Pancreas (tissue), 10 donors: ENCODE measurements at regions of chr2 and their contacts with region 1.

Region 1: GRCh38 chr2:64865073-64865830 is 123.9 kb upstream of the SLC1A4 start:
- DNase-seq: peak; percentile 46 to 84 (median 70)
- ATAC-seq: peak; percentile 89 to 96 (median 92)
- H3K4me3 ChIP-seq: peak overlapping the region; percentile 57 to 65 (median 64)
- H3K27ac ChIP-seq: peak overlapping the region; percentile 48 to 91 (median 68)
- H3K4me1 ChIP-seq: peaks cover 0 to 6% (median 0%) of the 10 kb centered on the region in 3 donors
- H3K27me3 ChIP-seq: no peaks in the 10 kb centered on the region
- CTCF ChIP-seq: peak; percentile 42 to 85 (median 62)

Region 2: DNA sequence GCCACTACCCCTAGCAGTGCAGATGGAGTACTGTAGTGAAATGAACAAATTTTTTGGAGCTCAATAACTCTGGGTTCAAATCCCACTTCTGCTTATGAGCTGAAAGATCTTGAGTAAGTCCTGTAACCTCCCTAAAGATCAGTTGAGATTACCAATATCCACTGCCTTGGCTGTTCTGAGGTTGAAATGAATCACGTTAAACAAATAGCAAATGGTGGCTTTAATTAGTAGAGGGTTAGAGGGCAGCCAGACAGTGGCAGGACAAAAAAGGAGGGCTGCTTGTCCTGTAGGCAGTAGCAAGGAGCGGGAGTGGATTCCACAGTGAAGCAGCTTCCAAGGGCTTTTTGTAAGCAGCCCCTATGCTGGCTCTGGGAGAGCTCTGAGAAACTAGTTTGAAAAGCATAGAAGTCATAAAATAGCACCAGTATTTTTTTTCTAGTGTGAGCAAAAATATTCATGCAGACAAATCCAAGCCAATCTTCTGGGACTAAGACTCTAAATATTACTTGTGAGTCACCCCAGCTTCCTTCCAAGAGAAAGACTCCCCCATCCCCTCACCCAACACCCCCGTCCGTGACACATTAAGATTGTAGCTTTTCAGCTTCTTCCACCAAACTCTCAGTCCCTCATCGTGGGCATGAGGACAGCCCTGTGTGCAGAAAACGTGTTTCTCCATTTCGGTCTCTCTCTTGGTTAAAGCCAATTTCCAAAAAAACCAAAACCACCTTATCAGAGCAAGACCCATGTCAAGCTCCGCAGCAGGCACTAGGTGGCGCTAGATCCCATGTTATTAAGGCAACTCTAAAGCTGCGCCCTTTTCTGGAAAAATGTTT is 534.8 kb before region 1 on chr2:
- intact Hi-C with region 1: loop called in 1 of 3 experiments (anchors 10 kb)
- DNase-seq: peak; percentile 63 to 87 (median 79)
- ATAC-seq: peak; percentile 83 to 89 (median 84)
- H3K4me3 ChIP-seq: no peak overlapping the region
- H3K27ac ChIP-seq: peak overlapping the region in 2 of 4 donors; percentile 17 to 35
- H3K4me1 ChIP-seq: no peaks in the 10 kb centered on the region
- H3K27me3 ChIP-seq: no peaks in the 10 kb centered on the region
- CTCF ChIP-seq: peak; percentile 72 to 90 (median 84)

Region 3: DNA sequence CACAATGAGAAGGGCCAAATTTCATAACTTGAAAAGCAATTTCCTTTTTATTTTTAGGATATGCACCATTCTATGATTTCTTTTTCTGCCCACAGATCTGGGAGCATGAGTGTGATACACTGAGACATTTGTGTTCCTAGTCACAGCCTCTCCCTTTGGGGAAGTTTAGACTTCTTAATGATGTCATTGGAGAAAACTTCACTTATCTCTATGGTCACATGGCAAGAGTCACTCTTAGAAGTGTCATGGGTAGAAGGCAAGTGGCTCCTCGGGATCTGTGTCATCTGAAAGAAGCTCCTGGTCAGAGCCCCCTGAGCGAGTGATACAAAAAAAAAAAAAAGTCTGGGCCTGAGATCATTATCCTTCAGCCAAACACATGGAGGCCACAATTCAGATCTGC is 473.8 kb before region 1 on chr2:
- intact Hi-C with region 1: no loop called
- DNase-seq: no peak
- ATAC-seq: peak in 1 of 4 donors; percentile 75
- H3K4me3 ChIP-seq: no peak overlapping the region
- H3K27ac ChIP-seq: no peak overlapping the region
- H3K4me1 ChIP-seq: no peaks in the 10 kb centered on the region
- H3K27me3 ChIP-seq: no peaks in the 10 kb centered on the region
- CTCF ChIP-seq: no peak

Region 4: DNA sequence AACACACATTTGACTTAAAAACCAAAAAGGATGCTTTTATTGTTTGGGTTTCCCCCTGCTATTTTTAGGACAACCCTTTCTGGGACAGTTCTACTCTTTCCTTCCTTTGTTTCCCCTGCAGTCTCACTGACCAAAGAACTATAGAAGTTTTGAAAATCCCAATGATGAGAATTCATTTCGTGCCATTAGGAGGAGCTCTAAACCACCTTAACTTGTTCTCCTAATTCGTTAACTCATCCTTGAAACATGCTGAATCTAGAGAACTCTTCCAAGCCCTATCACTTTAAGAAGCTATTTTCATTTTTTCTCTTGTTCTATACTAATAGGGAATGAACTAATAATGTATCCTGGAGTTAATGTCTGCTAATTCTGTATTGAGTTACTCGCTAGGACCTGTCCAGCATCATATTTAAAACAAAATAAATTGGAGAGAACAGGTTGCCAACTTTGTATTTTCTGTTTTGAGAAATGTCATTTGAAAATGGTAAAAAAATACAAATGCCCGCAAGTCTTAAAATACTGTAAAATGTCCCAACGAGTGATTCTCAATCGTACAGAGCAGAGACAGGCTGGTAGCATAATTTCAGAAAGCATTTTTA is 278.3 kb before region 1 on chr2:
- intact Hi-C with region 1: loop called in 2 of 3 experiments (anchors 5 to 10 kb)
- DNase-seq: no peak
- ATAC-seq: peak in 3 of 4 donors; percentile 81 to 84 (median 81)
- H3K4me3 ChIP-seq: no peak overlapping the region
- H3K27ac ChIP-seq: no peak overlapping the region
- H3K4me1 ChIP-seq: peaks cover 4 to 7% (median 5%) of the 10 kb centered on the region in 3 donors
- H3K27me3 ChIP-seq: no peaks in the 10 kb centered on the region
- CTCF ChIP-seq: peak in 2 of 4 donors; percentile 28 to 30

Region 5: GRCh38 chr2:64594226-64594989 is 270.8 kb before region 1 on chr2:
- intact Hi-C with region 1: loop called in 2 of 3 experiments (anchors 5 to 10 kb)
- DNase-seq: no peak
- ATAC-seq: no peak
- H3K4me3 ChIP-seq: no peak overlapping the region
- H3K27ac ChIP-seq: no peak overlapping the region
- H3K4me1 ChIP-seq: no peaks in the 10 kb centered on the region
- H3K27me3 ChIP-seq: no peaks in the 10 kb centered on the region
- CTCF ChIP-seq: no peak

Region 6: DNA sequence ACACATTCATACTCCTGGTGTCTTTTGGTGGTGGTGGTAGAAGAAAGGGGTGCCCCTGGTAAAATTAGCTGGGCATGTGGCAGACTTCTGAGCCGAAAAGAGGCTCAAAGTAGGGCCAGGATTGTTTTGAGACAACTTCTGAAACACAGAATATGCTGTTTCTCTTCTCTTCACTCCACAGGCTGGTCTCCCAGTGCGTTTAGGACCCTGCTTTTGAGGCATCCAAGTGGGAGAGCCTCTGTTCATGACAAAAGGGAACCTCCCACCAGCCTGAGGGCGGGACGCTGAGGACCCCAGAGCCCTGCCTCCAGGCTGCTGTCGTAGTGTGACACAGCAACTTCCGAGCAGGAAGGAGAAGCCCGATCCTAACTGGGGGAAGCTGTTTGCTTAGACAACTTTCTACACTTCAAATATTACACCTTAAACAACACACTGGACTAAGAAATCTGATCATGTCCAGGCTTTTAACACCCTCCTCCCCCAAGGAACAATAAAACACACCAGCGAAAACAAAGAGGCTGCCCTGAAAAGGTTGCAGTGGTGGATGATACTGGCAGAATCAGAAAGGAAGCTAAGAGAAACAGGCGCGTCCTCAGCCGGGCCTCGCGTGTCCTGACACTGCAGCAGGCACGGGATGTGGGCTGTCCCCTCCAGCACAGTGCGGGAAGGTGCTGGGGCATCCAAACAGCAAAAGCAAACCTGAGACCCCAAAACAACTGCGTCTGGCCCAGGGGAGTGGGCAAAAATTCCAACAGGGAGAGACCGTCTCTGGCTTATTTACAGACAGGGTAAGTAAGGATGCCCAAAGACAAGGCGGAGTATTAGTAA is 220.9 kb before region 1 on chr2:
- intact Hi-C with region 1: loop called in 1 of 3 experiments (anchors 5 kb)
- DNase-seq: peak in 5 of 6 donors; percentile 38 to 69 (median 45)
- ATAC-seq: peak; percentile 37 to 84 (median 66)
- H3K4me3 ChIP-seq: peak overlapping the region in 2 of 4 donors; percentile 23 to 27
- H3K27ac ChIP-seq: peak overlapping the region; percentile 36 to 88 (median 75)
- H3K4me1 ChIP-seq: peaks cover 16 to 52% (median 38%) of the 10 kb centered on the region in 3 donors
- H3K27me3 ChIP-seq: no peaks in the 10 kb centered on the region
- CTCF ChIP-seq: no peak

Region 7: DNA sequence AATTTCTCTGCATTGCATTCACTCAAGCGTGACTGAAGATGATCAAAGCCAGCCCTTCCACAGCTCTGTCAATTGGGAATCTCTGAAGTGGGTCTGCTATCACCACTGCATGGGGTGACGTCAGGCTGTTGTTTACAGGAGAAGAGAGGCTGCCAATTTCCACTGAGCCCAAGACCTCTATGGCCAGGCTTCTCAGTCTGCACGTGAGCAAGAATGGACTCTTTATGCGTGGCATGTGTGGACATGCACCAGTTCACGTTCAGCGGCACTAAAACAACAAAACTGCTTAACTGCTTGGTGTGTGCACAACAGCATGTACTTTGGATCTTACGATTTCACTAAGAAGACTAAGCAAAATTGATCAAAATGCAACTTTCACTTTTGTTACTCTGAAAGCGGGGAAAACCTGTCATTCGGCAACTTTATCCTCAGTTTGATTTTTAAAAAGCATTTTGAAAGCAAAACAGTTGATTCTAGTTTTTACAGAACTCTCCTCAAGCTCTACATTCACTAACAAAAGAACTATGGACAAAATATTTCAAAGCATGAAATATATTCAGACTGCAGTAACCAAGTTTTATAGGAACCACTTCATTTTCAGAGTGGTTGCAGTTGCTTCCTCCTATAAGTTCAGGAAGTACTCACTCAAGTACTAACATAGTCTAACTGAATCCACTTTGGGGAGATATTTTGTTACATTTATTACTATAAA is 134.5 kb before region 1 on chr2:
- intact Hi-C with region 1: loop called in 1 of 3 experiments (anchors 10 kb)
- DNase-seq: peak; percentile 53 to 82 (median 66)
- ATAC-seq: peak; percentile 95 to 98 (median 96)
- H3K4me3 ChIP-seq: peak overlapping the region in 3 of 4 donors; percentile 14 to 41 (median 31)
- H3K27ac ChIP-seq: peak overlapping the region; percentile 41 to 82 (median 65)
- H3K4me1 ChIP-seq: peaks cover 5 to 29% (median 8%) of the 10 kb centered on the region in 3 donors
- H3K27me3 ChIP-seq: no peaks in the 10 kb centered on the region
- CTCF ChIP-seq: no peak